Naive thymus-derived CD4-positive, alpha-beta T cell (primary cell): ENCODE measurements at regions of chr12 and their contacts with region 1.

Region 1: GRCh38 chr12:91877022-91877421 is 268.6 kb downstream of the BTG1 start:
- DNase-seq: peak; percentile 51 to 97 (median 93)
- ATAC-seq: peak; percentile 94
- H3K4me3 ChIP-seq: peak overlapping the region; percentile 39
- H3K4me3 Mint-ChIP-seq: peak overlapping the region; percentile 77 to 88 (median 82)
- H3K27ac ChIP-seq: peak overlapping the region; percentile 92
- H3K27ac Mint-ChIP-seq: peak overlapping the region; percentile 95 to 100 (median 99)
- H3K4me1 ChIP-seq: peaks cover 59% of the 10 kb centered on the region in 2 donors
- H3K4me1 Mint-ChIP-seq: peaks cover 40 to 85% (median 80%) of the 10 kb centered on the region in 7 donors
- H3K27me3 ChIP-seq: no peaks in the 10 kb centered on the region
- H3K27me3 Mint-ChIP-seq: no peaks in the 10 kb centered on the region

Region 2: DNA sequence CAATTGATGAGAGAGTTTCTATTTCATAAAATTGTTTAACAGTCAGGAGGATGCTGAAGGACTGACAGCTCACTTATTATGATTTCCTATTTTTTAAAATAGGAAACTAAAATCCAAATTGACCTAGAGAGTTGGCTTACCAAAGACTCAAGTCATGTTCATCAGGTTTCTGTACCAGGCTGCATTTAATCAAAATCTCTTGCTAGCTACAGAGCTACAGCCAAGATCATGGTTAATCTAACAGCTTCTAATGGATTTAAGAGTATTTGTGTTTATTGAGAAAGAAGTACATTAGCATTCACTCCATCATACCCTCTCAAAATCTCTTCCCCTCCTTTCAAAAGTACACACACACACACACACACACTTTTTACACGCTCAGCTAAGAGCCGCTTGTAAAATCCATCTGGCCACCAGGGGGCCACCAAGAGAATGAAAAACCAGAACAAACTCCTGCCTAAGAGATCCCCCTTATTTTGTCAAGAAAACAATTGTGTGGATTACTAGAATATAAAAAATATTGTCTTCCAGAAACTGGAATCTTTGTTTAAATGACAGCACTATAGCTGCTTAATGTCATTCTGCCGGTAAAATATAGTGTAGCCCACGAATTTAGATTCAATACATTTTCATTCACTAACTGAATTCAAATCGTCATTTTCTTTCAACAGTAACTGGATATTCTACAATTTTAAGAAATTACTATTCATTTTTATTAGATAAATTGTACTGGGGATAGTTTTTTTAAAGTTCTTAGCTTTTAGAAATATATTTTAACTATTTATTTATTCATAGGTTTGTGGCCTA is 65.3 kb before region 1 on chr12:
- CTCF ChIA-PET with region 1: interaction called, 6 read pairs
- POLR2A ChIA-PET with region 1: interaction called, 33 read pairs
- intact Hi-C with region 1: loop called (anchors 1 to 2 kb)
- DNase-seq: peak; percentile 64 to 79 (median 70)
- ATAC-seq: peak; percentile 90
- H3K4me3 ChIP-seq: peak overlapping the region; percentile 37
- H3K4me3 Mint-ChIP-seq: peak overlapping the region in 9 of 10 donors; percentile 31 to 80 (median 52)
- H3K27ac ChIP-seq: peak overlapping the region; percentile 22
- H3K27ac Mint-ChIP-seq: peak overlapping the region in 8 of 9 donors; percentile 81 to 97 (median 86)
- H3K4me1 ChIP-seq: peaks cover 0 to 15% of the 10 kb centered on the region in 2 donors
- H3K4me1 Mint-ChIP-seq: peaks cover 10 to 48% (median 35%) of the 10 kb centered on the region in 7 donors
- H3K27me3 ChIP-seq: no peaks in the 10 kb centered on the region
- H3K27me3 Mint-ChIP-seq: no peaks in the 10 kb centered on the region

Region 3: DNA sequence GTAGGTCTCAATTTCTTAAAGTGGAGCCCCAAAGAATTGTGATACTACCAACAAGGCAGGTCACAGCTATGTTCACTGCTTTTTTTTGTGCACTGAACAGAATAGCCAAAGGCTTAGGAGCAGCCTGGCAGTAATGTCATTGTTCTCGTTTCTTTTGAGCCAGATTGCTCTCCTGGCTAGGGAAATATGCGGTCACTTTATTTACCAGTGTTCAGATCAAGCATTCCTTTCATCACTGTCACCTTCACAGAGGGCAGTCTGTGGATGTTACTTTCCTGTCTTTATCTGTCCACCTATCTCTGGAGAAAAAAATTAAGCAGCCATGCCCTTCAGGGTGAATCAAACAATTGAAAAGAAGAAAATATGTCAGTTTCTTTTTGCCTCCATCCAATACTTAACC is 109.1 kb after region 1 on chr12:
- CTCF ChIA-PET with region 1: interaction called, 4 read pairs
- POLR2A ChIA-PET with region 1: interaction called, 11 read pairs
- intact Hi-C with region 1: no loop called
- DNase-seq: no peak
- ATAC-seq: no peak
- H3K4me3 ChIP-seq: no peak overlapping the region
- H3K4me3 Mint-ChIP-seq: peak overlapping the region in 5 of 10 donors; percentile 2 to 56 (median 42)
- H3K27ac ChIP-seq: no peak overlapping the region
- H3K27ac Mint-ChIP-seq: peak overlapping the region; percentile 6 to 81 (median 63)
- H3K4me1 ChIP-seq: peaks cover under 1 to 27% of the 10 kb centered on the region in 2 donors
- H3K4me1 Mint-ChIP-seq: peaks cover 17 to 86% (median 71%) of the 10 kb centered on the region in 7 donors
- H3K27me3 ChIP-seq: no peaks in the 10 kb centered on the region
- H3K27me3 Mint-ChIP-seq: no peaks in the 10 kb centered on the region

Region 4: DNA sequence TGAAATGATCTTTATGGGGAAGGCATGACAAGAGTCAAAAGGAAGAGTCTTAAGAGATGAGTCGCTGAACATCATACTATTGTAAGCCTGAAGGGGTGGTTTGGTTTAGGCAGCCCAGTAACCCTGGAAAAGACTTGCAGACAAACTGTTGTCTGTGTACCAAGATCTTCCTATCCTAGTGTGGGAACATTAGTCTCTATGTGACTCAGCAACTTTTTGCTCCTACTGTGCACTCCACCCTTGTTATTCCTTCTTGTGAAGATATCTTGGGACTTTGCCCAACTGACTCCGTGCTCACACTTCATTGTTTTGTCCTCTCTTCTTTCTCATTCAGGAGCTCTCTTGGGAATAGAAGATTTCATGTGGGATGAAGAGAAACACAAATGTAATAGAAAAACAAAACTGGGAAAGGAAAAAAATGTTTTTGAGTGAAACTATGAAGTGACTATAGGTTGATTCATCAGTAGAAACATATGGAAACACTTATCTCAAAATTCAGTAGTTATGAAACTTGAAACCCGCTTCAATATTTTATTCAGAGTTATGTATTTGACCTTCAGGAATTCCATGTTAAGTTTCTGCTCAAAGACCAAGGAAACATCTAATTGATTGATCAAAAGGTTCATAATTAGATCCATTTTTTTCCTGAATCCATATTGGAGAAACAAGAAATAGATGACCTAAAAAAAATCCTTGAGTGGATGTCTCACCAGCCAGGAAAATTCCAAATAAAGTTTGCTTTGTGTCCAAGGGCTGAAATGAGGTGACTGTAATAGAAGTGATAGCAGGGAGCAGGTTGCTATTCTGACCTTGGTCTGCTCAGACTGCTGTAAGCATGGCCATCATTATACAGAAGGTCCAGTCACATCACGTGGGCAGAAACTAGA is 201.4 kb after region 1 on chr12:
- CTCF ChIA-PET with region 1: interaction called, 3 read pairs
- POLR2A ChIA-PET with region 1: no interaction called
- intact Hi-C with region 1: loop called in 1 of 2 experiments (anchors 2 kb)
- DNase-seq: no peak
- ATAC-seq: peak; percentile 31
- H3K4me3 ChIP-seq: no peak overlapping the region
- H3K4me3 Mint-ChIP-seq: peak overlapping the region in 7 of 10 donors; percentile 12 to 88 (median 51)
- H3K27ac ChIP-seq: peak overlapping the region; percentile 5
- H3K27ac Mint-ChIP-seq: peak overlapping the region in 8 of 9 donors; percentile 83 to 96 (median 90)
- H3K4me1 ChIP-seq: peaks cover 10 to 45% of the 10 kb centered on the region in 2 donors
- H3K4me1 Mint-ChIP-seq: peaks cover 37 to 87% (median 79%) of the 10 kb centered on the region in 7 donors
- H3K27me3 ChIP-seq: no peaks in the 10 kb centered on the region
- H3K27me3 Mint-ChIP-seq: no peaks in the 10 kb centered on the region

Region 5: DNA sequence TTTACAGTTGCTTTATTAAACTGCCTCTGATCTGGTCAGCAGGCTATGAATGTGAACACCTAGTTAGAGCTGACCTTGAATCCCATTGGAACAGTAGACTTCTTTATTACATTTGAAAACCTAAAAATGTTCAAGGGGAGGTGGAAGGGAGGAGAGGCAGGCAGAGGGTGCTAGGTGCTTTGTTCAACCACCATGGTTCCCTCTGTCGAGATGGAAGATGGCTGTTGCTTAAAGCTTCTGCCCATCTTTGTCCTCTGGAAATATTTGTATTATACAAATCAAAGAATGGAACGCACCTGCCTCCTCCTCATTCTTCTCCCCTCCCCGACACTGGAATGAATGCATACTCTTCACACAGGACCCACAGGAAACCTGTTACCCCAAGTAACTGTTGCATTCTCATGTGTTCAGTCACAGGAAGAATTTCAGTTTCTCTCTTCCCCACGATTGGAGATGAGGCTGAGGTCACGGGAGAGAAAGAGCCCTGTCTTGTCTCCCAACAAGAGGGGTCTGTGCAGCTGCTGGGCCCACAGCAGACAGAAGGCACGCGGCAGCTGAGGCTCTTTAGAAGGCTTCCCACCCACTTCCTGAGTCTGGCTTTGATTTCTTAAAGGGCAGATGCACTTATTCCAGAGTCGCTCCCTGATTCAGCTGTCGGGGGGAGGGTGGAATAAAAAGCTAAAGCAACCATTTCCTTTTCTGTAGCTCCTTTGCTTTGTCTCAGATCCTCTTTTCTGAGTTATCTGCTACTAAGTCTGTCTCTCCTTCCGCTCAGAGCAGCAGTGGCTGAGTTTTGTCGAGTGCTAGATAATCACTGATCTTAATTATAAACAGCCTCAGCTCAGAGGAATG is 486.5 kb after region 1 on chr12:
- CTCF ChIA-PET with region 1: no interaction called
- POLR2A ChIA-PET with region 1: interaction called, 8 read pairs
- intact Hi-C with region 1: loop called in 1 of 2 experiments (anchors 5 kb)
- DNase-seq: peak in 8 of 9 donors; percentile 23 to 75 (median 62)
- ATAC-seq: peak; percentile 65
- H3K4me3 ChIP-seq: peak overlapping the region; percentile 49
- H3K4me3 Mint-ChIP-seq: peak overlapping the region; percentile 68 to 90 (median 80)
- H3K27ac ChIP-seq: peak overlapping the region; percentile 69
- H3K27ac Mint-ChIP-seq: peak overlapping the region; percentile 92 to 99 (median 97)
- H3K4me1 ChIP-seq: peaks cover 35 to 67% of the 10 kb centered on the region in 2 donors
- H3K4me1 Mint-ChIP-seq: peaks cover 33 to 88% (median 76%) of the 10 kb centered on the region in 7 donors
- H3K27me3 ChIP-seq: no peaks in the 10 kb centered on the region
- H3K27me3 Mint-ChIP-seq: no peaks in the 10 kb centered on the region

Region 6: GRCh38 chr12:92593734-92594402 is 716.8 kb after region 1 on chr12:
- CTCF ChIA-PET with region 1: no interaction called
- POLR2A ChIA-PET with region 1: no interaction called
- intact Hi-C with region 1: loop called (anchors 1 kb)
- DNase-seq: peak; percentile 51 to 97 (median 92)
- ATAC-seq: peak; percentile 95
- H3K4me3 ChIP-seq: peak overlapping the region; percentile 16
- H3K4me3 Mint-ChIP-seq: peak overlapping the region; percentile 22 to 83 (median 72)
- H3K27ac ChIP-seq: peak overlapping the region; percentile 86
- H3K27ac Mint-ChIP-seq: peak overlapping the region; percentile 90 to 100 (median 98)
- H3K4me1 ChIP-seq: peaks cover 27 to 30% of the 10 kb centered on the region in 2 donors
- H3K4me1 Mint-ChIP-seq: peaks cover 23 to 74% (median 44%) of the 10 kb centered on the region in 7 donors
- H3K27me3 ChIP-seq: no peaks in the 10 kb centered on the region
- H3K27me3 Mint-ChIP-seq: no peaks in the 10 kb centered on the region